ENCODE measurements at regions of chr20 and their contacts with region 1.

Region 1: GRCh38 chr20:49278036-49278817 is at the start of gene ZNFX1:
- DNase-seq: peak; percentile 96 to 99 (median 99)
- ATAC-seq: peak; percentile 83
- H3K4me3 ChIP-seq: peak within 1 kb of the TSS; percentile 71 to 84
- H3K4me3 Mint-ChIP-seq: peak within 1 kb of the TSS; percentile 96
- H3K27ac ChIP-seq: peak within 1 kb of the TSS; percentile 84 to 89
- H3K27ac Mint-ChIP-seq: peak within 1 kb of the TSS; percentile 99
- H3K4me1 ChIP-seq: peaks cover 66% of the 10 kb centered on the region
- H3K4me1 Mint-ChIP-seq: peaks cover 67% of the 10 kb centered on the region
- H3K27me3 ChIP-seq: no peaks in the 10 kb centered on the region
- H3K27me3 Mint-ChIP-seq: no peaks in the 10 kb centered on the region
- CTCF ChIP-seq: no peak
- total RNA-seq, gene ZNFX1: 53.8 to 55.0 TPM

Region 2: GRCh38 chr20:47501483-47502270 is 1776.5 kb before region 1 on chr20 and contains the start of gene NCOA3:
- CTCF ChIA-PET with region 1: no interaction called
- POLR2A ChIA-PET with region 1: no interaction called
- intact Hi-C with region 1: loop called in 1 of 2 experiments (anchors 5 kb)
- DNase-seq: peak; percentile 73 to 92 (median 90)
- ATAC-seq: peak; percentile 80
- H3K4me3 ChIP-seq: peak within 1 kb of the TSS; percentile 60 to 91
- H3K4me3 Mint-ChIP-seq: peak within 1 kb of the TSS; percentile 97
- H3K27ac ChIP-seq: peak within 1 kb of the TSS; percentile 49 to 71
- H3K27ac Mint-ChIP-seq: peak within 1 kb of the TSS; percentile 98
- H3K4me1 ChIP-seq: peaks cover 24% of the 10 kb centered on the region
- H3K4me1 Mint-ChIP-seq: peaks cover 37% of the 10 kb centered on the region
- H3K27me3 ChIP-seq: no peaks in the 10 kb centered on the region
- H3K27me3 Mint-ChIP-seq: no peaks in the 10 kb centered on the region
- CTCF ChIP-seq: peak; percentile 34
- total RNA-seq, gene NCOA3: 45.1 to 47.1 TPM

Region 3: GRCh38 chr20:49140834-49141233 is 137.4 kb before region 1 on chr20:
- CTCF ChIA-PET with region 1: no interaction called
- POLR2A ChIA-PET with region 1: no interaction called
- intact Hi-C with region 1: no loop called
- DNase-seq: no peak
- ATAC-seq: no peak
- H3K4me3 ChIP-seq: no peak overlapping the region
- H3K4me3 Mint-ChIP-seq: no peak overlapping the region
- H3K27ac ChIP-seq: no peak overlapping the region
- H3K27ac Mint-ChIP-seq: no peak overlapping the region
- H3K4me1 ChIP-seq: no peaks in the 10 kb centered on the region
- H3K4me1 Mint-ChIP-seq: peaks cover 20% of the 10 kb centered on the region
- H3K27me3 ChIP-seq: no peaks in the 10 kb centered on the region
- H3K27me3 Mint-ChIP-seq: no peaks in the 10 kb centered on the region
- CTCF ChIP-seq: no peak

Region 4: DNA sequence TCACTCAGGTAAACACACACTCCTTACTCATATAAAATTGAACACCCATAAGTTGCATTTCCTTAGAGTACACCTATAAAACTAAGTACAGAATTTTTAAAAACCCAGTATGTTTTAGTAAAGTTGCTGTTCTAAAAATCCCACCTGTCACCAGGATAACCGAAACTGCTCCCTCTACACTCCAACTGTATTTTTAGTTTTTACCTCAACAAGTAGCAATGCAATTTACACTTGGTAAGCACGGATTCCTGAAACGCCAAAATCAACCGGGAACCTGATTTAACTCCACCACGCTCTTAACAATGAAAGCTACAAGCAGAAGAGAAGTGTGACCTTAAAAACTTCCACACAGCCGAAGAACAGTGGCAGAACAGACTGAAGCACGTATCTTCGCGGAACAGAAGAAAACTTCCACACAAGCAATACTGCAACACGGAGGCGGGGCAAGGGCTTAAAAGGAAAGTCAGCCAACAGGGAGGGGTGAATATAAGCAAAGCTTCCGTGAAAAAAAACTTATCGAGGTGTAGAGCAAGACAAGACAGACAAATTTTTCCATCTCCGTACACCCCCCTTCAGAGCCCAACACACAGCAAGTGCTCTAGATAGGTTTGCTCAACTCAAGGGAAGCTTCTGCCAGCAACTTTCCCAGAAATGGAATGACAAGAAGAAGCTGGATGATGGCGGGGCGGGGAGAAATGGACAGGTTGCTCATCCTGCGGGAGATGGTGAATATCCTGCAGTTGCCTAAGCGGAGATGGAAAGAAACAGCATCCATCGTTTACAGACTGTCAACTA is 91.5 kb before region 1 on chr20:
- CTCF ChIA-PET with region 1: no interaction called
- POLR2A ChIA-PET with region 1: interaction called, 3 read pairs
- intact Hi-C with region 1: loop called (anchors 1 kb)
- DNase-seq: peak; percentile 22 to 84 (median 69)
- ATAC-seq: peak; percentile 41
- H3K4me3 ChIP-seq: peak overlapping the region; percentile 67 to 82
- H3K4me3 Mint-ChIP-seq: peak overlapping the region; percentile 85
- H3K27ac ChIP-seq: peak overlapping the region; percentile 46 to 81
- H3K27ac Mint-ChIP-seq: peak overlapping the region; percentile 77
- H3K4me1 ChIP-seq: peaks cover 41% of the 10 kb centered on the region
- H3K4me1 Mint-ChIP-seq: peaks cover 47% of the 10 kb centered on the region
- H3K27me3 ChIP-seq: peaks cover 0 to 2% of the 10 kb centered on the region in 2 experiments
- H3K27me3 Mint-ChIP-seq: no peaks in the 10 kb centered on the region
- CTCF ChIP-seq: no peak

Region 5: GRCh38 chr20:49245921-49246740 is 32.1 kb before region 1 on chr20:
- CTCF ChIA-PET with region 1: interaction called, 5 read pairs
- POLR2A ChIA-PET with region 1: no interaction called
- intact Hi-C with region 1: loop called in 1 of 2 experiments (anchors 2 kb)
- DNase-seq: peak in 3 of 9 experiments; percentile 17 to 62 (median 44)
- ATAC-seq: peak; percentile 82
- H3K4me3 ChIP-seq: no peak overlapping the region
- H3K4me3 Mint-ChIP-seq: no peak overlapping the region
- H3K27ac ChIP-seq: peak overlapping the region in 1 of 2 experiments; percentile 14
- H3K27ac Mint-ChIP-seq: peak overlapping the region; percentile 55
- H3K4me1 ChIP-seq: no peaks in the 10 kb centered on the region
- H3K4me1 Mint-ChIP-seq: peaks cover 8% of the 10 kb centered on the region
- H3K27me3 ChIP-seq: no peaks in the 10 kb centered on the region
- H3K27me3 Mint-ChIP-seq: no peaks in the 10 kb centered on the region
- CTCF ChIP-seq: peak; percentile 61

Region 6: DNA sequence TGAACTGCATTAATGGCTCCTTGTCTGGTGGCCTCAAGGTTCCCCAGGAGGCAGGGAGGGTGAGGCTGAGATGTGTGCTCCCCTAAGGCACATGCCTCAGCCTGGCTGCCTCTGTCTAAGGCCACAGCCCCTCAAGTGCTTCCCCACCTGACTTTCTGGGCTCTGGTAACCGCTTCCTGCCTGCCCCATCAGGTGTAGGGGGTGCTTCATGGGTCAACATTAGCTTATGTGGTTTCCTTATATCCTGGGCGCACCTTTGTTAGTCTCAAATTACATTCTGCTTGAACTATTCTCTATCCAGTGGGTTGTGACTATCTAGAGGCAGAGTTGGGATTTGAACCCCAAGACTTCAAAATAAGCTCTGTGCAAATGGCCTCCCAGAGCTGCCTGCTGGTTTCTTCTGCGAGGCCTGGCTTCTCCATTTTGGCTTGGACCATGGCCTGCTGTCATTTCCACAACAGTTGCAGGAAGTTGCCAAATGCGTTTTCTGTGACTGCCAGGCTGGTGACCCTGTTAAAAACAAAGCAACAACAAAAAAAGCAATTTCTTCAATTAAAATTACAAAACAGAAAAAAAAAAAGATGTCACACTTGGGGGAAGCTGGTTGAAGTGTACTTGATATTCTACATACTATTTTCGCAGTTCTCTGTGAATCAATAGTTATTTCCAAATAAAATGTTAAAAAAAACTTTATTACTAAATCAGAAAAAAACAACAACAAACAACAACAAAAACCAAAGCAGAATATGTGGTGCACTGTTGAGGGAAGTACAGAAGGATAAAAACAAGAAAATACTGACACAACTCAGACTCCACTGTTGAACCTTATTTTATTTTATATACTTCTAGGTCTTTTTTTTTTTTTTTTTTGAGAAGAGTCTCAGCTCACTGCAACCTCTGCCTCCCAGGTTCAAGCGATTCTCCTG is 19.6 kb after region 1 on chr20:
- CTCF ChIA-PET with region 1: interaction called, 10 read pairs
- POLR2A ChIA-PET with region 1: interaction called, 35 read pairs
- intact Hi-C with region 1: no loop called
- DNase-seq: peak in 6 of 9 experiments; percentile 5 to 70 (median 37)
- ATAC-seq: peak; percentile 78
- H3K4me3 ChIP-seq: no peak overlapping the region
- H3K4me3 Mint-ChIP-seq: no peak overlapping the region
- H3K27ac ChIP-seq: peak overlapping the region in 1 of 2 experiments; percentile 46
- H3K27ac Mint-ChIP-seq: peak overlapping the region; percentile 84
- H3K4me1 ChIP-seq: peaks cover 9% of the 10 kb centered on the region
- H3K4me1 Mint-ChIP-seq: peaks cover 14% of the 10 kb centered on the region
- H3K27me3 ChIP-seq: no peaks in the 10 kb centered on the region
- H3K27me3 Mint-ChIP-seq: no peaks in the 10 kb centered on the region
- CTCF ChIP-seq: no peak

Region 7: GRCh38 chr20:49915378-49916145 is 637.3 kb after region 1 on chr20 and contains the start of gene SPATA2:
- CTCF ChIA-PET with region 1: no interaction called
- POLR2A ChIA-PET with region 1: no interaction called
- intact Hi-C with region 1: loop called in 1 of 2 experiments (anchors 5 kb)
- DNase-seq: peak; percentile 87 to 98 (median 95)
- ATAC-seq: peak; percentile 75
- H3K4me3 ChIP-seq: peak within 1 kb of the TSS; percentile 67 to 100
- H3K4me3 Mint-ChIP-seq: peak within 1 kb of the TSS; percentile 98
- H3K27ac ChIP-seq: peak within 1 kb of the TSS; percentile 99 to 100
- H3K27ac Mint-ChIP-seq: peak within 1 kb of the TSS; percentile 100
- H3K4me1 ChIP-seq: peaks cover 21% of the 10 kb centered on the region
- H3K4me1 Mint-ChIP-seq: peaks cover 39% of the 10 kb centered on the region
- H3K27me3 ChIP-seq: no peaks in the 10 kb centered on the region
- H3K27me3 Mint-ChIP-seq: no peaks in the 10 kb centered on the region
- CTCF ChIP-seq: no peak
- total RNA-seq, gene SPATA2: 20.9 to 22.4 TPM